Naive thymus-derived CD4-positive, alpha-beta T cell (primary cell): ENCODE measurements at regions of chr2 and their contacts with region 1.

Region 1: GRCh38 chr2:100610381-100610831 is 47.6 kb downstream of the PDCL3 start:
- DNase-seq: peak; percentile 67 to 86 (median 79)
- ATAC-seq: peak; percentile 91
- H3K4me3 ChIP-seq: no peak overlapping the region
- H3K4me3 Mint-ChIP-seq: no peak overlapping the region
- H3K27ac ChIP-seq: no peak overlapping the region
- H3K27ac Mint-ChIP-seq: no peak overlapping the region
- H3K4me1 ChIP-seq: peaks cover 0 to 4% of the 10 kb centered on the region in 2 donors
- H3K4me1 Mint-ChIP-seq: peaks cover 5 to 17% (median 10%) of the 10 kb centered on the region in 7 donors
- H3K27me3 ChIP-seq: no peaks in the 10 kb centered on the region
- H3K27me3 Mint-ChIP-seq: peaks cover 0 to 12% (median 0%) of the 10 kb centered on the region in 5 donors

Region 2: GRCh38 chr2:100178051-100178788 is 432.2 kb before region 1 on chr2:
- CTCF ChIA-PET with region 1: no interaction called
- POLR2A ChIA-PET with region 1: no interaction called
- intact Hi-C with region 1: no loop called
- DNase-seq: no peak
- ATAC-seq: peak; percentile 72
- H3K4me3 ChIP-seq: no peak overlapping the region
- H3K4me3 Mint-ChIP-seq: no peak overlapping the region
- H3K27ac ChIP-seq: no peak overlapping the region
- H3K27ac Mint-ChIP-seq: no peak overlapping the region
- H3K4me1 ChIP-seq: no peaks in the 10 kb centered on the region
- H3K4me1 Mint-ChIP-seq: peaks cover 0 to 1% (median 0%) of the 10 kb centered on the region in 7 donors
- H3K27me3 ChIP-seq: no peaks in the 10 kb centered on the region
- H3K27me3 Mint-ChIP-seq: no peaks in the 10 kb centered on the region

Region 3: DNA sequence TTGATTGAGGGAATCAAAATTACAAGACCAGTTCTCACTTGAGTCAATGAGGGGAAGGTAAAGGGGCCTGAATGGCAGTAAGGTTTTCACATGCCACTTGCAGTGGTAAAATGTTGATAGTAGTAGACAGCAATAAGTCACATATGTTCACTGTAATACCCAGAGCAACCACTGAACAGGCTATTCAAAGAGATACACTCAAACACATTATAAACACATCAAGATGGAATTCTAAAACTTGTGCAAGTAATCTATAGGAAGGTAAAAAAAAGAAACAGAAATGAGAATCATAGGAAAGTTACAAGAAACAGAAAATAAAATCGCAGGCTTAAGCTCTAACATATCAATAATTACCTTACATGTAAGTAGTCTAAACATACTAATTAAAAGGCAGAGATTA is 381.4 kb before region 1 on chr2:
- CTCF ChIA-PET with region 1: no interaction called
- POLR2A ChIA-PET with region 1: no interaction called
- intact Hi-C with region 1: no loop called
- DNase-seq: no peak
- ATAC-seq: no peak
- H3K4me3 ChIP-seq: no peak overlapping the region
- H3K4me3 Mint-ChIP-seq: no peak overlapping the region
- H3K27ac ChIP-seq: no peak overlapping the region
- H3K27ac Mint-ChIP-seq: peak overlapping the region in 1 of 9 donors; percentile 28
- H3K4me1 ChIP-seq: no peaks in the 10 kb centered on the region
- H3K4me1 Mint-ChIP-seq: peaks cover 0 to 3% (median 0%) of the 10 kb centered on the region in 7 donors
- H3K27me3 ChIP-seq: no peaks in the 10 kb centered on the region
- H3K27me3 Mint-ChIP-seq: peaks cover 6 to 20% (median 8%) of the 10 kb centered on the region in 5 donors

Region 4: GRCh38 chr2:100588071-100588786 is 22.2 kb before region 1 on chr2:
- CTCF ChIA-PET with region 1: interaction called, 4 read pairs
- POLR2A ChIA-PET with region 1: interaction called, 3 read pairs
- intact Hi-C with region 1: loop called in 1 of 2 experiments (anchors 2 kb)
- DNase-seq: peak in 7 of 9 donors; percentile 21 to 69 (median 58)
- ATAC-seq: peak; percentile 94
- H3K4me3 ChIP-seq: no peak overlapping the region
- H3K4me3 Mint-ChIP-seq: peak overlapping the region in 2 of 10 donors; percentile 13 to 60
- H3K27ac ChIP-seq: no peak overlapping the region
- H3K27ac Mint-ChIP-seq: peak overlapping the region in 8 of 9 donors; percentile 1 to 72 (median 32)
- H3K4me1 ChIP-seq: peaks cover 7 to 16% of the 10 kb centered on the region in 2 donors
- H3K4me1 Mint-ChIP-seq: peaks cover 17 to 51% (median 30%) of the 10 kb centered on the region in 7 donors
- H3K27me3 ChIP-seq: no peaks in the 10 kb centered on the region
- H3K27me3 Mint-ChIP-seq: peaks cover 0 to 11% (median 0%) of the 10 kb centered on the region in 5 donors

Region 5: GRCh38 chr2:100640431-100641124 is 30.2 kb after region 1 on chr2:
- CTCF ChIA-PET with region 1: interaction called, 6 read pairs
- POLR2A ChIA-PET with region 1: interaction called, 5 read pairs
- intact Hi-C with region 1: loop called in 1 of 2 experiments (anchors 1 kb)
- DNase-seq: no peak
- ATAC-seq: no peak
- H3K4me3 ChIP-seq: no peak overlapping the region
- H3K4me3 Mint-ChIP-seq: peak overlapping the region in 1 of 10 donors; percentile 1
- H3K27ac ChIP-seq: no peak overlapping the region
- H3K27ac Mint-ChIP-seq: peak overlapping the region in 2 of 9 donors; percentile 43 to 65
- H3K4me1 ChIP-seq: peaks cover 9 to 37% of the 10 kb centered on the region in 2 donors
- H3K4me1 Mint-ChIP-seq: peaks cover 25 to 57% (median 56%) of the 10 kb centered on the region in 7 donors
- H3K27me3 ChIP-seq: no peaks in the 10 kb centered on the region
- H3K27me3 Mint-ChIP-seq: peaks cover 0 to 31% (median 0%) of the 10 kb centered on the region in 5 donors

Region 6: DNA sequence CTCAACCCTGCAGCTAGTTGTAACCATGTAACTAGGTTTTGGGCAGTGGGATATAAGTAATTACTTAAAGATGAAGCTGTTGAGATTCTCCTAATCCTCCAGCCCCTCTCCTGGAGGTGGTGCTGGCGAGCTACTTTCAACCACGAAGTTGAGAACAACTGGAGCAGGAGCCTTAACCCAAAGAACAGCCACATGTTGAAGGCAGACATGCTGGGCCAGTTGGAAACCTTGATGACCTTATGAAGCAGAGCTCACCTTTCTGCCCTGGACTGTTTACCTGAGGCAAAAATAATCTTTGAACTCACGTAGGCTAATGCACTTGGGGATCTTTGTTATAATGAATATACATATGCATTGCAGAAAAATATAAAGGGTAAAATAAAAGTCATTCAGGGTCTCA is 119.9 kb after region 1 on chr2:
- CTCF ChIA-PET with region 1: interaction called, 6 read pairs
- POLR2A ChIA-PET with region 1: no interaction called
- intact Hi-C with region 1: loop called in 1 of 2 experiments (anchors 1 kb)
- DNase-seq: peak in 8 of 9 donors; percentile 18 to 51 (median 30)
- ATAC-seq: peak; percentile 37
- H3K4me3 ChIP-seq: no peak overlapping the region
- H3K4me3 Mint-ChIP-seq: no peak overlapping the region
- H3K27ac ChIP-seq: no peak overlapping the region
- H3K27ac Mint-ChIP-seq: no peak overlapping the region
- H3K4me1 ChIP-seq: no peaks in the 10 kb centered on the region
- H3K4me1 Mint-ChIP-seq: no peaks in the 10 kb centered on the region
- H3K27me3 ChIP-seq: no peaks in the 10 kb centered on the region
- H3K27me3 Mint-ChIP-seq: peaks cover 7 to 20% (median 11%) of the 10 kb centered on the region in 5 donors

Region 7: GRCh38 chr2:100964681-100965169 is 354.3 kb after region 1 on chr2:
- CTCF ChIA-PET with region 1: interaction called, 5 read pairs
- POLR2A ChIA-PET with region 1: no interaction called
- intact Hi-C with region 1: loop called in 1 of 2 experiments (anchors 1 kb)
- DNase-seq: no peak
- ATAC-seq: no peak
- H3K4me3 ChIP-seq: no peak overlapping the region
- H3K4me3 Mint-ChIP-seq: no peak overlapping the region
- H3K27ac ChIP-seq: no peak overlapping the region
- H3K27ac Mint-ChIP-seq: no peak overlapping the region
- H3K4me1 ChIP-seq: no peaks in the 10 kb centered on the region
- H3K4me1 Mint-ChIP-seq: peaks cover 0 to 12% (median 8%) of the 10 kb centered on the region in 7 donors
- H3K27me3 ChIP-seq: no peaks in the 10 kb centered on the region
- H3K27me3 Mint-ChIP-seq: peaks cover 0 to 3% (median 0%) of the 10 kb centered on the region in 5 donors

Region 8: GRCh38 chr2:101151141-101151858 is 540.9 kb after region 1 on chr2 and contains the start of gene TBC1D8:
- CTCF ChIA-PET with region 1: no interaction called
- POLR2A ChIA-PET with region 1: no interaction called
- intact Hi-C with region 1: loop called in 1 of 2 experiments (anchors 5 kb)
- DNase-seq: peak; percentile 19 to 79 (median 47)
- ATAC-seq: peak; percentile 89
- H3K4me3 ChIP-seq: peak within 1 kb of the TSS; percentile 45
- H3K4me3 Mint-ChIP-seq: peak within 1 kb of the TSS; percentile 76 to 90 (median 86)
- H3K27ac ChIP-seq: no peak within 1 kb of the TSS
- H3K27ac Mint-ChIP-seq: peak within 1 kb of the TSS in 7 of 9 donors; percentile 14 to 79 (median 65)
- H3K4me1 ChIP-seq: peaks cover 8 to 19% of the 10 kb centered on the region in 2 donors
- H3K4me1 Mint-ChIP-seq: peaks cover 14 to 36% (median 25%) of the 10 kb centered on the region in 7 donors
- H3K27me3 ChIP-seq: peaks cover 0 to 4% of the 10 kb centered on the region in 2 donors
- H3K27me3 Mint-ChIP-seq: peaks cover 0 to 75% (median 16%) of the 10 kb centered on the region in 5 donors
- total RNA-seq, gene TBC1D8: 0.87 to 20.1 (median 2.4) TPM